Heart right ventricle (tissue), 16 donors: ENCODE measurements at regions of chr1 and their contacts with region 1.

Region 1: GRCh38 chr1:88998716-88999115 is 6.3 kb upstream of the KYAT3 start:
- DNase-seq: peak in 1 of 2 donors; percentile 30
- ATAC-seq: peak; percentile 73 to 92 (median 85)
- H3K4me3 ChIP-seq: no peak overlapping the region
- H3K27ac ChIP-seq: no peak overlapping the region
- H3K4me1 ChIP-seq: peaks cover 0 to 12% (median 2%) of the 10 kb centered on the region in 9 donors
- H3K27me3 ChIP-seq: no peaks in the 10 kb centered on the region
- CTCF ChIP-seq: peak; percentile 51 to 72 (median 62)

Region 2: GRCh38 chr1:89198491-89199072 is 199.9 kb after region 1 on chr1 and contains the start of gene GBP4:
- intact Hi-C with region 1: loop called in 2 of 10 experiments (anchors 10 kb)
- DNase-seq: peak; percentile 37 to 53
- ATAC-seq: peak; percentile 71 to 89 (median 82)
- H3K4me3 ChIP-seq: peak within 1 kb of the TSS; percentile 51 to 72 (median 62)
- H3K27ac ChIP-seq: peak within 1 kb of the TSS; percentile 9 to 93 (median 86)
- H3K4me1 ChIP-seq: peaks cover 0 to 63% (median 47%) of the 10 kb centered on the region in 9 donors
- H3K27me3 ChIP-seq: no peaks in the 10 kb centered on the region
- CTCF ChIP-seq: no peak
- total RNA-seq, gene GBP4: 2.9 to 46.5 (median 10.4) TPM

Region 3: DNA sequence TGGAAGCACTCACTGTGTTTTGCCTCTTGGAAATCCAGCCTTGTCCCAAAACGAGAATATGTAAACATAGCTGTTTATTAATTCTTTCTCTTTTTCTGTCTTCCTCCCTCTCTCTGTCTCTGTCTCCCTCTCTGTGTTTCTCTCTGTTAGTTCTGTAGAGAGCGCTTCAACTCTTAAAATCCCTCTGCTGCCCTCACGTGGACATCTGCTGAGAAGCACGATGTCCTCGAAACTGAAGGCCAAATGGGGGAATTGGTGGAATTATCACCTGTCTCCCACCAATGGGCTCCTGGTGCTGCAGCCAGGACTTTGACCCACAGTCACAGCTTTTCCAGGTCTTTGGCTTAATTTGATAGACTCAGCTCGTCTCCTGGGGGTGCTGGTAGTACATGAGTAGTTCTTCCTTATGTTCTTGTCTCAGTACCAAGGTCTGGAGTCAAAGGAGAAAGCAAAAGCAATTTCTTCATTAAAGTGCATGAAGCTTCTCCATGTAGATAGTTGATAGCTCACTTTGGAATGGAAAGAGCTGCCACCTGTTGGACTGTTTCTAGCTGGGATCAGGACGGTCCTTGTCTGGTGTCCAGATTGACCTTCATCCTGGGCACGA is 359.7 kb after region 1 on chr1:
- intact Hi-C with region 1: loop called (anchors 1 to 5 kb)
- DNase-seq: peak; percentile 70 to 83
- ATAC-seq: peak; percentile 79 to 96 (median 90)
- H3K4me3 ChIP-seq: no peak overlapping the region
- H3K27ac ChIP-seq: peak overlapping the region in 4 of 10 donors; percentile 2 to 44 (median 14)
- H3K4me1 ChIP-seq: peaks cover 0 to 27% (median 6%) of the 10 kb centered on the region in 9 donors
- H3K27me3 ChIP-seq: no peaks in the 10 kb centered on the region
- CTCF ChIP-seq: peak; percentile 57 to 93 (median 85)

Region 4: DNA sequence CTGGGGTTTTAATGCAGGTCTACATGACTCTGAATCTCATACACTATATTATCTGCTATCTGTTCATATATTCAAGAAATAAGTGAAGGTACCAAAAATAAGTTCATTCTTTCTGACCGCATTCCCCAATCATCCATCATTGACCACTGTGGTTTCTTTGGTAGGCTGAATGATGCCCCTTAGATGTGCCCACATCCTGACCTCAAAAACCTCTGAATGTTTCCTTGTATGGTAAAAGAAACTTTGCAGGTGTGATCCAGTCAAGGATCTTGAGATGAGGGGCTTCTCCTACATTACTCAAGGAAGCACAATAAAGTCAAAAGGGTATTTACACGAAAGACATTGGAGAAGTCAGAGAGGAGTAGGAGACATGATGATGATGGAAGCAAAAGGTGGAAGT is 465.3 kb after region 1 on chr1:
- intact Hi-C with region 1: loop called in 6 of 10 experiments (anchors 5 to 10 kb)
- DNase-seq: no peak
- ATAC-seq: no peak
- H3K4me3 ChIP-seq: no peak overlapping the region
- H3K27ac ChIP-seq: no peak overlapping the region
- H3K4me1 ChIP-seq: peaks cover 0 to 13% (median 0%) of the 10 kb centered on the region in 9 donors
- H3K27me3 ChIP-seq: peaks cover 0 to 22% (median 8%) of the 10 kb centered on the region in 7 donors
- CTCF ChIP-seq: no peak